HAP-1 (cell line): ENCODE measurements at regions of chr3 and their contacts with region 1.

Region 1: GRCh38 chr3:40580494-40581091 is 55.8 kb downstream of the ZNF621 start:
- DNase-seq: peak; percentile 59 to 82
- H3K4me3 ChIP-seq: no peak overlapping the region
- H3K4me1 ChIP-seq: no peaks in the 10 kb centered on the region
- H3K27me3 ChIP-seq: peaks cover 11% of the 10 kb centered on the region

Region 2: GRCh38 chr3:40337136-40338108 is 243.2 kb before region 1 on chr3:
- in situ Hi-C with region 1: loop called (anchors 25 kb)
- DNase-seq: no peak
- H3K4me3 ChIP-seq: no peak overlapping the region
- H3K4me1 ChIP-seq: no peaks in the 10 kb centered on the region; the same call in 1 of the 2 replicates
- H3K27me3 ChIP-seq: no peaks in the 10 kb centered on the region

Region 3: GRCh38 chr3:40456940-40457823 is 123.4 kb before region 1 on chr3 and contains the start of gene RPL14:
- in situ Hi-C with region 1: no loop called
- DNase-seq: peak; percentile 88 to 95
- H3K4me3 ChIP-seq: peak within 1 kb of the TSS; percentile 85
- H3K4me1 ChIP-seq: peaks cover 29% of the 10 kb centered on the region
- H3K27me3 ChIP-seq: no peaks in the 10 kb centered on the region; the same call in 1 of the 2 replicates

Region 4: DNA sequence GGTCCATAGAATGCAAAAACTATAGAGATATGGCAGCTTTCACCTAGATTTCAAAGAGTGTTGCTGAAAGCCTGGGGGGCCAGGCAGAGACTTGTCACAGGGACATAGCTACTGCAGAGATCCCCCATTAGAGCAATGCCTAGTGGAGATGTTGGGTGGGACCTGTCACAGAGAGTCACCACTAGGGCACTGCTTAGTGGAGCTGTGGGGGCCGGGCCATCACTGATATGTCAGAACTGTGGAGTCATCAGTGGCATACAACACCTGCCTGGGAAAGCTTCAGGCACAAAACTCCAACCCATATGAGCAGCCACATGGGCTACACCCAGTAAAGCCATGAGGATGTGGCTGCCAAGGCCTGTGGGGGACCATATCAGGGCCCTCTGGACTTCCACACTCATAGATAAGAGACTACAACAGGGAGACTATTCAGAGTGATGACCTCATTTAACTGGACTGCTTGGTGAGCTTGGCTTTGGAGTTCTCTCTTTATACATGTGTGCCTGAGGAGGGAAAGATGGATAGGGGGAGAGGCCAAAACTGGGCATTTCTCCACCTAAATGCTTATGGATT is 120.5 kb after region 1 on chr3:
- in situ Hi-C with region 1: no loop called
- DNase-seq: no peak
- H3K4me3 ChIP-seq: no peak overlapping the region
- H3K4me1 ChIP-seq: no peaks in the 10 kb centered on the region
- H3K27me3 ChIP-seq: no peaks in the 10 kb centered on the region